Prostate gland (tissue), 2 donors: ENCODE measurements at regions of chr5 and their contacts with region 1.

Region 1: DNA sequence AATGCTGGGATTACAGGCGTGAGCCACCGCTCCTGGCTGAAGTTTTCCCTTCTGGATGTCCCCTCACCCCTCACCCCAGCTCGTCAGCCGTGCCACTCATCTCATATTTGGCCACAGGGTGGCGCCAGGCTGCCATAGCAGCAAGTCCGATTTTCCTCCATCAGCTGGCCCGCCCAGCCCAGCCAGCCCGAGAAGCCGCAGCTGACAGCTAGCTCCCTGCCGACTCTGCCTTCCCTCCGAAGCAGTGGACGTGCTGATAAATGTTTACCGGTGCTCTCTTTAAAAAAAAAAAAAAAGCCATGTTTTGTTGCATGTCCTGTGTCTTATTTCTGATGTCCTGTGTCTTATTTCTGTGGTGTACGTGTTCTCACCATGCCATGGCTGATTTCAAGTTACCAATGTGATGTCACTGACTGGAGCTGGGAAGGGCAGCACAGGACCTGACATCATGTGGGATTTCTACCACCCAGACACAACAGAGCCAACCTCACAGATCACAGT is 58.3 kb downstream of the PFDN1 start:
- DNase-seq: peak; percentile 90
- H3K4me3 ChIP-seq: no peak overlapping the region
- H3K27ac ChIP-seq: no peak overlapping the region
- H3K4me1 ChIP-seq: peaks cover 4% of the 10 kb centered on the region
- H3K27me3 ChIP-seq: no peaks in the 10 kb centered on the region
- CTCF ChIP-seq: peak; percentile 71 to 96 (median 94)
- POLR2A ChIP-seq: no peak

Region 2: GRCh38 chr5:139914218-139914807 is 330.3 kb before region 1 on chr5:
- intact Hi-C with region 1: no loop called
- DNase-seq: no peak
- H3K4me3 ChIP-seq: no peak overlapping the region
- H3K27ac ChIP-seq: no peak overlapping the region
- H3K4me1 ChIP-seq: no peaks in the 10 kb centered on the region
- H3K27me3 ChIP-seq: no peaks in the 10 kb centered on the region
- CTCF ChIP-seq: no peak
- POLR2A ChIP-seq: no peak

Region 3: GRCh38 chr5:140174465-140175366 is 69.9 kb before region 1 on chr5 and contains the start of gene CYSTM1:
- intact Hi-C with region 1: loop called (anchors 10 kb)
- DNase-seq: peak; percentile 97
- H3K4me3 ChIP-seq: peak within 1 kb of the TSS; percentile 88 to 97
- H3K27ac ChIP-seq: peak within 1 kb of the TSS; percentile 99
- H3K4me1 ChIP-seq: no peaks in the 10 kb centered on the region
- H3K27me3 ChIP-seq: no peaks in the 10 kb centered on the region
- CTCF ChIP-seq: peak in 2 of 4 experiments; percentile 21 to 50
- POLR2A ChIP-seq: peak; percentile 97
- total RNA-seq, gene CYSTM1: 37.0 to 51.7 TPM

Region 4: GRCh38 chr5:140346348-140347101 is 102.0 kb after region 1 on chr5 and contains the start of gene HBEGF:
- intact Hi-C with region 1: loop called (anchors 2 kb)
- DNase-seq: peak; percentile 85
- H3K4me3 ChIP-seq: peak within 1 kb of the TSS; percentile 71 to 89
- H3K27ac ChIP-seq: peak within 1 kb of the TSS; percentile 75 to 79
- H3K4me1 ChIP-seq: peaks cover 8% of the 10 kb centered on the region
- H3K27me3 ChIP-seq: no peaks in the 10 kb centered on the region
- CTCF ChIP-seq: peak; percentile 10 to 69 (median 44)
- POLR2A ChIP-seq: peak; percentile 96
- total RNA-seq, gene HBEGF: 7.7 to 24.0 TPM

Region 5: DNA sequence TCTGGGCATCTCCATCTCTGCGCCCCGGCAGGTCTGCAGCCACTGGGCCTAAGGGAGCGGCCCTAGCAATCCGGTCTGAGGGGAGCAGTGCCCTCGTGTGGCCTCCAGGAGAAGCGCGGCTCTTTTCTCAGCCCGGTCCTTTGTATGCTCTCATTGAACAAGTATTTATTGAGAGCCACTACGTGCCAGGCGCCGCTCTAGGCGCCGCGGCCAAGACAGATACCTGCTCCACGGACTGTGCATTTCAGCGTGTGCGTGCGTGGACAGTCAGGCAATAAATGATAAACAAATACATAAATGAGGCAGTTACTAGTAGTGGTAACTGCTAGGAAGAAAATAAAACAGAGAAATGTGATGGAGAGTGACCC is 113.1 kb after region 1 on chr5:
- intact Hi-C with region 1: loop called (anchors 2 kb)
- DNase-seq: peak; percentile 81
- H3K4me3 ChIP-seq: no peak overlapping the region
- H3K27ac ChIP-seq: no peak overlapping the region
- H3K4me1 ChIP-seq: no peaks in the 10 kb centered on the region
- H3K27me3 ChIP-seq: no peaks in the 10 kb centered on the region
- CTCF ChIP-seq: peak; percentile 78 to 95 (median 87)
- POLR2A ChIP-seq: no peak